Psoas muscle (tissue), 8 donors: ENCODE measurements at regions of chr6 and their contacts with region 1.

Region 1: DNA sequence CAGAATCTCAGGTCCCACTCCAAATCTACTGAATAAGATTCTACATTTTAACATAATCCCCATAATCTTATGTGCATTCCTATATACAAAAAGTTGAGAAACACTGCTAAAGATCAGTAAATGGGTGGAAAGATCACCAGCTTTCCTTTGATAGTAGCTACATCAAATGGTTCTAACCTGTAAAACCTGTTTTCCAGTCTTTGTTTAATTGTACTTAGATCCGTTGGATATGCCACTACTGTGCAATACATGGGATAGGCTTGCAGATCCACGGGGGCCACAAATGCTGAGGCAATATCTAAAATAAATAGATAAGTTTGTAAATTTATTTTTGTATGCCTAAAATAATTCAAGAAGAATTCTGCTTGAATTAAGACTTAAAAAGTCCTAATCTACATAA is 94.2 kb downstream of the IRAK1BP1 start:
- DNase-seq: no peak
- ATAC-seq: no peak
- H3K4me3 ChIP-seq: no peak overlapping the region
- H3K27ac ChIP-seq: no peak overlapping the region
- H3K4me1 ChIP-seq: no peaks in the 10 kb centered on the region
- H3K27me3 ChIP-seq: no peaks in the 10 kb centered on the region
- CTCF ChIP-seq: no peak

Region 2: GRCh38 chr6:78199044-78199443 is 762.5 kb before region 1 on chr6:
- intact Hi-C with region 1: no loop called
- DNase-seq: no peak
- ATAC-seq: no peak
- H3K4me3 ChIP-seq: no peak overlapping the region
- H3K27ac ChIP-seq: no peak overlapping the region
- H3K4me1 ChIP-seq: no peaks in the 10 kb centered on the region
- H3K27me3 ChIP-seq: no peaks in the 10 kb centered on the region
- CTCF ChIP-seq: no peak

Region 3: GRCh38 chr6:78995946-78996345 is 34.4 kb after region 1 on chr6:
- intact Hi-C with region 1: loop called in 1 of 2 experiments (anchors 5 kb)
- DNase-seq: no peak
- ATAC-seq: no peak
- H3K4me3 ChIP-seq: no peak overlapping the region
- H3K27ac ChIP-seq: no peak overlapping the region
- H3K4me1 ChIP-seq: no peaks in the 10 kb centered on the region
- H3K27me3 ChIP-seq: no peaks in the 10 kb centered on the region
- CTCF ChIP-seq: no peak